Activated CD4-positive, alpha-beta memory T cell treated with anti-CD3 and anti-CD28 coated beads for 36 hours (primary cell): ENCODE measurements at regions of chr3 and their contacts with region 1.

Region 1: DNA sequence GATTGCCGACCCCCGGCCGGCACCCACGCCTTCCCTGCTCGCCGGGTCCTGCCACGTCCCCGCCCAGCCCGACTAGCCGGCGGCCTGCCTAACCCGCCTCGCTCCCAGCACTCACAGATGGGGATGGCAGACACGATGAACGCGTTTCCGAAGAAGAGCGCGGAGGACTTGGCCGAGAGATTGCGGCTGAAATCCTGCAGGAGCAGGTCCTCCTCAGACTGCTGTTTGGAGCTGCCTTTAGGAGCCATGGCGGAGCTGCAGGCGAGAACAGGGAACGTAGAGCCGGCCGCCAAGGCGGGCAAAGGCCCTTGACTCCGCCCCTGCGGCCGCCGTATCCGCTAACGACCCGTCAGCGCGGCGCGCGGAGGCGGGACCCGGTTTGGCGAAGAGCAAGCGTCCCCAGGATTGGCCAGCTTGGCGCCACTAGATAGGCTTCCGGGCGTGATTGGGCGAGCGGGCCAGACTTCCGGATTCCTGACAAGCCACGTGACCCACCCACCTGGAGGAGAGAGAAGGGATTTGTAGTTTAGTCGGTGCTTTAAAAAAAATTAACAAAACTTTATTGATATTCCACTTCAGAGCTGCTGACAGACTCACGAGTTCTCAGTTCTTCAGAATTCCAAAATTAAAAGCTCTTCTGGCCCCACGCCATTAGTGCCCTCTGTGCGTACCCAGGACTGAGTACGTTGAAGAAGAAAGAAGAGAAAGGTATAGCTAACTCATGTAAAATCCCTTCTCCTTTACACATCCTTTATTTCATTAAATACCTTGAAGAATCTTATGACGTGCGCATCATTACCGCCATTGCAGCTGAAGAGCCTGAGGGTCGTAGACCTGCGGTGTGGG is at the start of gene SSR3:
- DNase-seq: peak; percentile 99
- H3K4me3 Mint-ChIP-seq: peak within 1 kb of the TSS; percentile 97
- H3K27ac Mint-ChIP-seq: peak within 1 kb of the TSS; percentile 88
- H3K4me1 Mint-ChIP-seq: peaks cover 46% of the 10 kb centered on the region
- H3K27me3 Mint-ChIP-seq: no peaks in the 10 kb centered on the region
- total RNA-seq, gene SSR3: 162 to 170 TPM

Region 2: DNA sequence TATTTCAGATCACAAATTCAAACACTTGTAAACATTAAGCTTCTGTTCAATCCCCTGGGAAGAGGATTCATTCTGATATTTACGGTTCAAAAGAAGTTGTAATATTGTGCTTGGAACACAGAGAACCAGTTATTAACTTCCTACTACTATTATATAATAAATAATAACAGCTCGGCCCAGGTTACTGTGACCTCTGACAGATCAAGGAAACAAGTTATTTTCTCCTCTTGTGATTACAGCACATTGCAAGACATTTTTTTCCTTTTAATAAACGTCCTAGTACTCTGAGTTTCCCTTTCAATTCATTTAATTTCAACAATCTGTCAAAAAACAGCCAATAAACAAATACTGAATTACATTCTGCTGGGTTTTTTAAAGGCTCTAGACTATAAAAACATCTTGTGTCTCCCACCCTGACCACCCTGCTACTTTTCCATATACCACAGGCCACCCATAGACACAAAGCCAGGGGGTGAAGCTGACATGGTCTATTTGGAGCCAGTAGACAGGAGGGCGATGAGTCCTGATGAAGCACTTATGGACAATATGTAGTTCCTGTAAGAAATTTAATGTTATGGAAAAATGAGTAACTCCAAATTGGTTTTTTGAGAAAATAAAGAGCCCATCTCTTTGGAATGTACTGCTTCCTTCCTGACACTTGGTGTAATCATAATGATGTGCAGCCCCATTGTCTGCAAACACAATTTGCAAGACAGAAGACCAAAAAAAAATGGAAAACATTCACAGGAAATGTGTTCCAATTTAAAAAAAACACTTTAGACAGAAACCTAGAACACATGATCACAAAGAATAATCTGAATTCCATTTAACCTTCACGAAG is 12.1 kb before region 1 on chr3:
- CTCF ChIA-PET with region 1: interaction called, 12 read pairs
- POLR2A ChIA-PET with region 1: interaction called, 8 read pairs
- intact Hi-C with region 1: no loop called
- DNase-seq: no peak
- H3K4me3 Mint-ChIP-seq: no peak overlapping the region
- H3K27ac Mint-ChIP-seq: no peak overlapping the region
- H3K4me1 Mint-ChIP-seq: peaks cover 14% of the 10 kb centered on the region
- H3K27me3 Mint-ChIP-seq: no peaks in the 10 kb centered on the region

Region 3: DNA sequence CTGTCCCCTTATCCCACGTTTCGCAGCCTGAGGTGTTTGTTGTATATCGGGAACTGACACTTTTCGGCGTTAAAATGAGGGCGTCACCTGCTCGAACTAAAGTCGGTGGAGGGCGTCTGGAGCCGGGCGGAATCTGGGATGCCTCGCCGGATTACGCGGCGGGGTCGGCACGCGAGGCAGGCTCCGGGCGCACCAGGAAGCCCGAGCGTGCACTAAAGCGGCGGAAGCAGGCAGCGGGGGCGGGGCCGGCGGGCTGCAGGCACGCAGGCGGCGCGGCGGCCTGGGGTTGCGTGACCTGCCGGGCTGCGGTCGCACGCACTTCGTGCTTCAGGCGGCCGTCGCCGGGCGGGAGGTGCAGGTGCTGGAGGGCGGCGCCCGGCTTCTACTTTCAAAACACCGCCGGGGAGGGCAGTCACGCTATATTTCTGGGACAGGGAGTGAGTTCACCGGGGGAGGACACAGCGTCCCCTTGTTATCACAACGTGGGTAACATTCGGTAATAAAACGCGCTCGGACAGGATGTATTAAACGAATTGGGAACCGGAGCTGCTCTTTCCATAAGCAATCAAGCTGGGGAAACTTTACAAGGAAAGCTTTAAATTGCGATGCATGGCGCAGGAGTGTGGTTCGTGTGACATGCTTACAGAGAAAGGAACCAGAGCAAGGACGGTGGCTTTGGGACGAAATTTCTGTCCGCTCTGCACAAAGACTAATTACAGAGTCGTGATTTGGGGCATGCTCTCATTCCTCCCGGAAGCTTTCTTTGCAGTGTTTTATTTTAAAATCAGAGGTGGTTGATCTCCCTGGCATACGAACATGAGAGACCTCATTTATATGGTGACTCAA is 262.0 kb after region 1 on chr3:
- CTCF ChIA-PET with region 1: no interaction called
- POLR2A ChIA-PET with region 1: no interaction called
- intact Hi-C with region 1: loop called (anchors 2 kb)
- DNase-seq: peak; percentile 92
- H3K4me3 Mint-ChIP-seq: peak overlapping the region; percentile 85
- H3K27ac Mint-ChIP-seq: peak overlapping the region; percentile 90
- H3K4me1 Mint-ChIP-seq: peaks cover 43% of the 10 kb centered on the region
- H3K27me3 Mint-ChIP-seq: no peaks in the 10 kb centered on the region